Body of pancreas (tissue), 4 donors: ENCODE measurements at regions of chr6 and their contacts with region 1.

Region 1: DNA sequence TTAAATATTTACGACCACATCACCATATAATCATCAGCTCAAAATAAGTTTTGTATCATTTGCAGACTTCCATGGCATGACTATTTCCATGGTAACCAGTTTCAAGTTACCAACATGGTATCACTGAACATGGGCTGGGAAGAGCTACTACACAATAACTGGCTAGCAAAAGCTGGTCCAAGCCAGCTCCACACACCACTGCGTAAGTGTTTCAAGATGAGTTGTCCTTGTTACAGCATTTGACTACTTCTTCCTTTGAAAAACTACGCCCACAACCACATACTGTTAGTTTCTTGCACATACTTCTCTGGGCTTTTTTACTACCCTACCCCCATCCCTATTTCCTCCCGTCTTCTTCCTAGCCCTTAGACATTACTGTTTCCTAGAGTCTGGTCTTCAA is 8.5 kb downstream of the CD164 start:
- DNase-seq: no peak
- ATAC-seq: no peak
- H3K4me3 ChIP-seq: no peak overlapping the region
- H3K27ac ChIP-seq: no peak overlapping the region
- H3K4me1 ChIP-seq: peaks cover 33% of the 10 kb centered on the region
- H3K27me3 ChIP-seq: no peaks in the 10 kb centered on the region
- CTCF ChIP-seq: no peak
- POLR2A ChIP-seq: no peak

Region 2: DNA sequence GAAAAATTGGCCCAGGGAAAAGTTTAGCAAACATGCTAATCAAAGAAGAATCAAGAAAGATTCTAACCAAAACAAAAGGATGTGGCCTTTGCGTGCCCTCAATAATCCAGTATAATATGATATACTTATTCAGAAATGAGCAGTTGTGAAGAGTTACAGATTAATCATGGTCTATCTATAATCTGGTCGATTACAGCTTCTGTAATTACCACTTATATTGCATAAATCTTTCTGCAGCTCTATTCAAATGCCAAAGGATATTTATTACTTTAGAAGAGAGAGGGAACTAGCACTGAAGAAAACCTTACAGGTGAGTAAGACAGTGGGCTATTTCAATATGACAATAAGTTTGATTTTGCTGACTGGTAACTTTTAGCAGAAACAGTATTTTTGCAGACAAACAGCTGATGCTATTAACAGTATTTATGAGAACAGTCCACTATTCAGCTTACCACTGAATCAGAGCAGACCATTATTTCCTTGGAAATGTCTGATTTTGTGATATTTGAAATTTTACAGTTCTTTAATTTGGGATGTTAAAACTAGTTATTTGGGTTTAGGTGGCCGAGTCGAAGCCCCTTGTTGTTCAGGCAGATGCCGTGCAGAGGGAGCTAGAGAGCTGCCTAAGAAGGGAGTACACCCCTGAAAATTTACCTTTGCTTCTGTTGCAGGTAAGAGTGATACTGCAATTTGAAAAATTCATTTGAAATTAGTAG is 186.2 kb before region 1 on chr6:
- intact Hi-C with region 1: loop called (anchors 10 kb)
- DNase-seq: peak; percentile 65 to 76 (median 70)
- ATAC-seq: peak; percentile 93
- H3K4me3 ChIP-seq: no peak overlapping the region
- H3K27ac ChIP-seq: no peak overlapping the region
- H3K4me1 ChIP-seq: no peaks in the 10 kb centered on the region
- H3K27me3 ChIP-seq: no peaks in the 10 kb centered on the region
- CTCF ChIP-seq: peak; percentile 82 to 94 (median 89)
- POLR2A ChIP-seq: no peak

Region 3: DNA sequence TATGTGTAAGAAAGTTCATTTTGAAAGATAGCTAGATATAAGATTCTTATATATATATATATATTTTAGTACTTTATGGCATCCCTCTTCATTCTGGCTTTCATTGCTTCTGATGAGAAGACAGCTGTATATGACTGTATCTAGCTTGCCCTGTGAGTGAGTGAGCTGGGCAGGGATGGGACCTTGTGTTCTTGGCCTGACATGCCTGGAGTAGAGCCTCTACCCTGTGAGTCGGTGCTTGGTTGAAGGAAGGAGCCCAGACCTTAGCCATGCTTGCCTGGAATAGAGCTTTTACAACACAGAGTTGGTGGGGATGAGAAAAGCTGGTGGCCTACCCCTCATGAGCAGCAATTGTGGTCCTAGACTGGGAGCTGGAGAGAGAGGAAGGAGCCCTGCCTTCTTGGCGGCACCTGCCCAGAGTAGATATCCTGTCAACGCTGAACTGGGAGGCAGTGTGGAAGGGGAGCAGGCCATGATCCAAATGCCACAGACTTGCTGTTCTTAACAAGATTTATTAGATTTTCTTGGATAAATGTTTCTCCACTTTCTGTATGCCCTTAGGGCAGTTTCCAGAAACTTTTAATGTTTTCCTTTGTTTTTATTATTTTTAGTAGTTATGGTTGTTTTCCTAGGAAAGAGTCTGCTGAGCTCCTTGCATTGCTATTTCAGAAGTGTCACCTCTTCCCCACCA is 348.9 kb after region 1 on chr6:
- intact Hi-C with region 1: no loop called
- DNase-seq: no peak
- ATAC-seq: no peak
- H3K4me3 ChIP-seq: no peak overlapping the region
- H3K27ac ChIP-seq: no peak overlapping the region
- H3K4me1 ChIP-seq: peaks cover 3% of the 10 kb centered on the region
- H3K27me3 ChIP-seq: no peaks in the 10 kb centered on the region
- CTCF ChIP-seq: no peak
- POLR2A ChIP-seq: no peak